ENCODE measurements at regions of chr1 and their contacts with region 1.

Region 1: GRCh38 chr1:15820478-15820877 is 13.0 kb upstream of the UQCRHL start:
- DNase-seq: no peak
- H3K4me3 Mint-ChIP-seq: no peak overlapping the region
- H3K27ac Mint-ChIP-seq: no peak overlapping the region
- H3K4me1 Mint-ChIP-seq: peaks cover 3% of the 10 kb centered on the region
- H3K27me3 Mint-ChIP-seq: no peaks in the 10 kb centered on the region

Region 2: DNA sequence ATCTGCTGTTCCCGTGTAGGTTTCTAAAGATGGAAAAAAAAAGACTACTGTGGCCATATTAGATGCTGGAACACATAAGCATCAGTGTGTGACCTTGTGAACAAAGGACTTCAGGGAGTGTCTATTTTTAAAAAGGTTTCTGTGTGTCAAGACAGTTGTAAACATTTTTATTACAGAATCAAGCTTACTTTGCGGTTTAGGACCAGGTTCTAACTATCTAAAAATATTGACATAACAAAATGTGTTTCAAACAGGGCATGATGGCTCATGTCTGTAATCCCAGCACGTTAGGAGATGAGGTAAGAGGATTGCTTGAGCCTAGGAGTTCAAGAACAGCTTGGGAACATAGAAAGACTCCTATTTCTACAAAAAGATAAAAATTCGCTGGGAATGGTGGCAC is 210.3 kb before region 1 on chr1:
- CTCF ChIA-PET with region 1: no interaction called
- POLR2A ChIA-PET with region 1: no interaction called
- intact Hi-C with region 1: no loop called
- DNase-seq: no peak
- H3K4me3 Mint-ChIP-seq: no peak overlapping the region
- H3K27ac Mint-ChIP-seq: no peak overlapping the region
- H3K4me1 Mint-ChIP-seq: no peaks in the 10 kb centered on the region
- H3K27me3 Mint-ChIP-seq: no peaks in the 10 kb centered on the region

Region 3: DNA sequence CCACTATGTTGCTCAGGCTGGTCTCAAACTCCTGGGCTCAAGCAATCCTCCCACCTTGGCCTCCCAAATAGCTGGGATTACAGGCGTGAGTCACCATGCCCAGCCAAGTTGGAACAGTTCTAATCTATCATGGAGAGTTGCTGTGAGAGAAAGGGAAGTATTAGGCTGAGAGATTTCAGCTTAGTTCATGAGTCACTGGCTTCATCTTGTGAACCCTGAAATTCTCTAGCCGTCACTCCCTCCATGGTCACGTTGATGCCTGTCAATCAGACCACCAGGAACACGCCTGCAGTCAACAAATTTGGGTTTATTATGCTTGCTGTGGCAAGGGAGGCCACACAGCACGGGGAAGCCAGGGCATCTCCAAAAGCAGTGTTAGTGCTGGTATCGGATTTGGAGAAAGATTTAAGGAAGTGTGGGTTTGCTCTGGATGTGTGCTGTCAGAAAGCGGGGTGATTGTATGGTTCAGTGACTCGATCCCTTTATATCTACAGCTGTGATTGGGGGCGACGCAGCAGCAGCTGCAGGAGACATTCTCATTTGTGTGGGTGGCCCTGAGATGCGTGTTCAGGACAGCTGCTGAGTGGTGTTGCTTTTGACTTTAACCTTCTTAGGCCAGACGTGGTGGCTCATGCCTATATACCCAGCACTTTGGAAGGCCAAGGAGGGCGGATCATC is 31.7 kb before region 1 on chr1:
- CTCF ChIA-PET with region 1: interaction called, 11 read pairs
- POLR2A ChIA-PET with region 1: no interaction called
- intact Hi-C with region 1: no loop called
- DNase-seq: no peak
- H3K4me3 Mint-ChIP-seq: no peak overlapping the region
- H3K27ac Mint-ChIP-seq: no peak overlapping the region
- H3K4me1 Mint-ChIP-seq: no peaks in the 10 kb centered on the region
- H3K27me3 Mint-ChIP-seq: peaks cover 4% of the 10 kb centered on the region

Region 4: GRCh38 chr1:15847100-15847892 is 26.8 kb after region 1 on chr1 and contains the start of gene SPEN:
- CTCF ChIA-PET with region 1: interaction called, 12 read pairs
- POLR2A ChIA-PET with region 1: no interaction called
- intact Hi-C with region 1: no loop called
- DNase-seq: peak; percentile 98
- H3K4me3 Mint-ChIP-seq: peak within 1 kb of the TSS; percentile 98
- H3K27ac Mint-ChIP-seq: peak within 1 kb of the TSS; percentile 93
- H3K4me1 Mint-ChIP-seq: peaks cover 45% of the 10 kb centered on the region
- H3K27me3 Mint-ChIP-seq: no peaks in the 10 kb centered on the region
- total RNA-seq, gene SPEN: 37.0 to 41.9 TPM

Region 5: GRCh38 chr1:15918962-15919715 is 98.7 kb after region 1 on chr1:
- CTCF ChIA-PET with region 1: interaction called, 3 read pairs
- POLR2A ChIA-PET with region 1: no interaction called
- intact Hi-C with region 1: loop called (anchors 5 kb)
- DNase-seq: peak; percentile 89
- H3K4me3 Mint-ChIP-seq: no peak overlapping the region
- H3K27ac Mint-ChIP-seq: no peak overlapping the region
- H3K4me1 Mint-ChIP-seq: peaks cover 41% of the 10 kb centered on the region
- H3K27me3 Mint-ChIP-seq: no peaks in the 10 kb centered on the region

Region 6: DNA sequence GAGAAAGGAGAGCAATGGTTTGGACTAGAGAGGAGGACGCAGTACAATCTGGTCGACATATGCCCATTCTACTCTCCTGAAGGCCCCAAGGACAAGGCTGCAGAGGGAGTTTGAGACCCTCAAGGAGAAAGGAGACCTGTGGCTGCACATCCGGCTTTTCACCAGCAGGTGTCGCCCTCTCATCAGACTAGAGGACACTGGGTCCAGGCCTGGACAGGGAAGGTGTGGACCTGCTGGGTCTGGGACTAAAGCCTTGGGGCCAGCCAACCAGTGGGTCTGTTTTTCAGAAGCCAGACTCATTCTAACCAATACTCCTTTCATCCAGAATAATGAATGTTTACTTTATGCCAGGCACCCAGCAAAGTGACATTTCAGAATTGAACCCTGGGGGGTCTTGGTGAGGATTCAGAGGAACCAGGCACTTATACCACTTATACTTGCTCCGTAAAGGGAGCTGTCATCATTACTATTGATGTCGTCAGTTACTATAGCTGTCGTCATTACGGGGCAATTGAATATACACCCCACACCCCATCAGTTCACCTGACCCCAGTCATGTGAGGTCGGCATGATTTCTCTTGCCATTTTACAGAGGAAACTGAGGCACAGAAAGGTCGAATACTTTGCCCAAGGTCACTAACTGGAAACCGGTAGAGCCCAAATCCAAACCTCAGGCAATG is 188.7 kb after region 1 on chr1:
- CTCF ChIA-PET with region 1: interaction called, 10 read pairs
- POLR2A ChIA-PET with region 1: no interaction called
- intact Hi-C with region 1: loop called (anchors 1 kb)
- DNase-seq: peak; percentile 79
- H3K4me3 Mint-ChIP-seq: no peak overlapping the region
- H3K27ac Mint-ChIP-seq: no peak overlapping the region
- H3K4me1 Mint-ChIP-seq: peaks cover 5% of the 10 kb centered on the region
- H3K27me3 Mint-ChIP-seq: peaks cover 6% of the 10 kb centered on the region

Measured in activated CD4-positive, alpha-beta memory T cell treated with anti-CD3 and anti-CD28 coated beads for 36 hours (primary cell).